ENCODE measurements at regions of chr5 and their contacts with region 1.

Region 1: GRCh38 chr5:28766565-28767158 is 1728.3 kb upstream of the CDH9 start:
- DNase-seq: no peak
- ATAC-seq: no peak
- H3K4me3 ChIP-seq: no peak overlapping the region
- H3K27ac ChIP-seq: no peak overlapping the region
- H3K4me1 ChIP-seq: no peaks in the 10 kb centered on the region
- H3K27me3 ChIP-seq: no peaks in the 10 kb centered on the region
- CTCF ChIP-seq: peak in 1 of 3 experiments; percentile 42; a peak in 1 of 6 replicates
- EP300 ChIP-seq: no peak
- POLR2A ChIP-seq: no peak
- RAD21 ChIP-seq: peak; percentile 55

Region 2: DNA sequence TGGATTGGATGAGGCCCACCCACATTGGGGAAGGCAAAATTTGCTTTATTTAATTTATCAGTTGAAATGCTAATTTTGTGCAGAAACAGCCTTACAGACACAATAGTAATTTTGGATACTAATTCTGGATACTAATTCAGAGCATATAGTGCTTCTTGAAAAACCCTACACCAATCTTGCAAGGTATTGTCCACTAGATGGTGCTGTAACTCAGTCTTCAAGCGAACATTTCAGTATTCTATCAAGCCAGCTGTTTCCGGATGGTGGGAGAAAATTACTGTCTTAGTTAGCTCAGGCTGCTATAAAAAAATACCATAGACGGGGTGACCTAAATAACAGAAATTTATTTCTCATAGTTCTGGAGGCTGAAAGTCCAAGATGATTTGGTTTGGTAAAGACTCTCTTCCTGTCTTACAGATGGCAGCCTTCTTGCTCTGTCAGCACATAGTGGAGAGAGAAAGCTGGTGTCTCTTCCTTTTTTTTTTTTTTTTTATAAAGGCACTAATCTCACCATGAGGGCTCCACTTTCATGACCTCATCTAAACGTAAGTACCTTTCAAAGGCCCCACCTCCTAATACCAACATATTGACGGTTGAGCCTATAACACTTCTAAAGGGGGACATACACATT is 421.7 kb before region 1 on chr5:
- CTCF ChIA-PET with region 1: interaction called, 39 read pairs
- POLR2A ChIA-PET with region 1: interaction called, 3 read pairs
- RAD21 ChIA-PET with region 1: interaction called, 12 read pairs
- SMC1A ChIA-PET with region 1: interaction called, 41 read pairs
- in situ Hi-C with region 1: no loop called
- intact Hi-C with region 1: loop called (anchors 2 kb)
- DNase-seq: peak; percentile 0
- ATAC-seq: peak; percentile 80
- H3K4me3 ChIP-seq: no peak overlapping the region
- H3K27ac ChIP-seq: no peak overlapping the region
- H3K4me1 ChIP-seq: no peaks in the 10 kb centered on the region
- H3K27me3 ChIP-seq: no peaks in the 10 kb centered on the region
- CTCF ChIP-seq: peak; percentile 46 to 56 (median 54); a peak in 4 of 6 replicates
- EP300 ChIP-seq: no peak
- POLR2A ChIP-seq: no peak
- RAD21 ChIP-seq: peak; percentile 54

Region 3: DNA sequence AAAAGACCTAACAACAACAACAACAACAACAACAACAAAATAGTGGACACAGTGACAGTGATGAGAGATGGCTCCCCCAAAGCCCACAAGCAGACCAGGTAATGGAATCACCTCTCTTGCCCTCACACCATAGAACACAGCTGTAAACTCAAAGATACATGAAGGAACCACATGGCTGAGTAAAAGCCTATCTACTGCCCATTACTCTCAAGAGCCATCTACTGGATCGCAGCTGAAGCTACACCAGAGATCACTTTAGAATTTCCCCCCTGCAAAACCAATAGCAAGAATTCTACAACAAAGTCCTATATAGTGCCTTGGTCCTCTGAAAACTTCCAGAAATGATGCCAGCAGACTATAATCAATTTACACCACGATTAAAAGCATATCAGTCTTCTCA is 190.6 kb before region 1 on chr5:
- CTCF ChIA-PET with region 1: interaction called, 5 read pairs
- POLR2A ChIA-PET with region 1: no interaction called
- RAD21 ChIA-PET with region 1: interaction called, 7 read pairs
- SMC1A ChIA-PET with region 1: no interaction called
- in situ Hi-C with region 1: no loop called
- intact Hi-C with region 1: loop called (anchors 5 kb)
- DNase-seq: no peak
- ATAC-seq: peak; percentile 72
- H3K4me3 ChIP-seq: no peak overlapping the region
- H3K27ac ChIP-seq: no peak overlapping the region
- H3K4me1 ChIP-seq: no peaks in the 10 kb centered on the region
- H3K27me3 ChIP-seq: no peaks in the 10 kb centered on the region
- CTCF ChIP-seq: peak in 1 of 3 experiments; percentile 13; a peak in 2 of 6 replicates
- EP300 ChIP-seq: no peak
- POLR2A ChIP-seq: no peak
- RAD21 ChIP-seq: no peak

Region 4: GRCh38 chr5:28743182-28744110 is 23.2 kb before region 1 on chr5:
- CTCF ChIA-PET with region 1: interaction called, 3 read pairs
- POLR2A ChIA-PET with region 1: no interaction called
- RAD21 ChIA-PET with region 1: interaction called, 3 read pairs
- SMC1A ChIA-PET with region 1: interaction called, 10 read pairs
- in situ Hi-C with region 1: no loop called
- intact Hi-C with region 1: no loop called
- DNase-seq: no peak
- ATAC-seq: no peak
- H3K4me3 ChIP-seq: no peak overlapping the region
- H3K27ac ChIP-seq: no peak overlapping the region
- H3K4me1 ChIP-seq: no peaks in the 10 kb centered on the region
- H3K27me3 ChIP-seq: no peaks in the 10 kb centered on the region
- CTCF ChIP-seq: no peak
- EP300 ChIP-seq: no peak
- POLR2A ChIP-seq: no peak
- RAD21 ChIP-seq: no peak

Measured in GM12878 (cell line).